CD4-positive, alpha-beta memory T cell (primary cell): ENCODE measurements at regions of chr1 and their contacts with region 1.

Region 1: DNA sequence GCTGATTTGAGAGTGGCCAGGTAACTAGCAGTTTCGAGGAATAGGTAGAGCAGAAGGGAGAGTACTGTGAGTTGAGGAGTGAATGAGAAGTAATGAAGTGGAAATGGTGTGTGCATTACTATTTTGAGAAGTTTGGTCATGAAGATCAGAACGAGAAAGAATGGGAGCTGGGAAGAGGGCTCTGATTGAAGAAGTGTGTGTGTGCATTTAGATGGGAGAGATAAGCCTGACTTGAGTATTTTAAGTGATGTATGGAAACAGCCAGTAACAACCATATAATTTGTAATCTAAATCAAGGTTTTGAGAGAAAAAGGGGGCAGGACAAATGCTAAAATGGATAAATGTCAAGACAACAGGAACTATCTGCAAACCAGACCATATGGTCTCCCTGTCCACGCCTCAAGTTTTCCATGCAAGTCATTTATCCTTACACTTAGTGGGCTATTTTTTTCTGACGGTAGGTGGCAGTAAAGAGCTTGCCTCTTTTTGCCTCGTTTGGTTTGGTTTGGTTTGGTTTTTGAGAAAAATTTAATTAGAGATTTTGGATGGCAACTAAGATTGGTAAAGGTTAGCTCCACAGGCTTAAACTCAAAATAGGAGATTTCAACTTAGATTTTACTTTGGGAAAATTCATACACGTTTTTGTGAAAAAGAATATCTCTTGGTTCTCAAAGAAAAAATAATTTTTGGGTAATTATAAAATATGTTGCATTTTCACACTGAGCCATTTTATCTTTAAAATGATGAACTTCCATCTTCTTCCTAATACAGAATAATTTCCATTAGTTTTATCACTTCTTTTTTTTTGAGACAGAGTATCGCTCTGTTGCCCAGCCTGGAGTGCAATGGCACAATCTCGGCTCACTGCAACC is 9.5 kb upstream of the B3GALNT2 start:
- DNase-seq: peak; percentile 47 to 68 (median 63)
- H3K4me3 ChIP-seq: no peak overlapping the region
- H3K4me3 Mint-ChIP-seq: no peak overlapping the region
- H3K27ac ChIP-seq: no peak overlapping the region
- H3K27ac Mint-ChIP-seq: peak overlapping the region in 1 of 7 donors; percentile 30
- H3K4me1 ChIP-seq: no peaks in the 10 kb centered on the region
- H3K4me1 Mint-ChIP-seq: peaks cover 0 to 1% (median 0%) of the 10 kb centered on the region in 4 donors
- H3K27me3 ChIP-seq: no peaks in the 10 kb centered on the region
- H3K27me3 Mint-ChIP-seq: peaks cover 4 to 6% of the 10 kb centered on the region in 2 donors

Region 2: GRCh38 chr1:234823191-234824176 is 690.2 kb before region 1 on chr1:
- CTCF ChIA-PET with region 1: no interaction called
- POLR2A ChIA-PET with region 1: no interaction called
- intact Hi-C with region 1: no loop called
- DNase-seq: no peak
- H3K4me3 ChIP-seq: no peak overlapping the region
- H3K4me3 Mint-ChIP-seq: no peak overlapping the region
- H3K27ac ChIP-seq: no peak overlapping the region
- H3K27ac Mint-ChIP-seq: peak overlapping the region in 2 of 7 donors; percentile 18 to 66
- H3K4me1 ChIP-seq: no peaks in the 10 kb centered on the region
- H3K4me1 Mint-ChIP-seq: peaks cover 0 to 2% (median 0%) of the 10 kb centered on the region in 4 donors
- H3K27me3 ChIP-seq: no peaks in the 10 kb centered on the region
- H3K27me3 Mint-ChIP-seq: no peaks in the 10 kb centered on the region

Region 3: GRCh38 chr1:235391874-235392273 is 121.9 kb before region 1 on chr1:
- CTCF ChIA-PET with region 1: no interaction called
- POLR2A ChIA-PET with region 1: no interaction called
- intact Hi-C with region 1: no loop called
- DNase-seq: no peak
- H3K4me3 ChIP-seq: no peak overlapping the region
- H3K4me3 Mint-ChIP-seq: no peak overlapping the region
- H3K27ac ChIP-seq: no peak overlapping the region
- H3K27ac Mint-ChIP-seq: no peak overlapping the region
- H3K4me1 ChIP-seq: no peaks in the 10 kb centered on the region
- H3K4me1 Mint-ChIP-seq: peaks cover 2 to 10% (median 5%) of the 10 kb centered on the region in 4 donors
- H3K27me3 ChIP-seq: no peaks in the 10 kb centered on the region
- H3K27me3 Mint-ChIP-seq: no peaks in the 10 kb centered on the region

Region 4: DNA sequence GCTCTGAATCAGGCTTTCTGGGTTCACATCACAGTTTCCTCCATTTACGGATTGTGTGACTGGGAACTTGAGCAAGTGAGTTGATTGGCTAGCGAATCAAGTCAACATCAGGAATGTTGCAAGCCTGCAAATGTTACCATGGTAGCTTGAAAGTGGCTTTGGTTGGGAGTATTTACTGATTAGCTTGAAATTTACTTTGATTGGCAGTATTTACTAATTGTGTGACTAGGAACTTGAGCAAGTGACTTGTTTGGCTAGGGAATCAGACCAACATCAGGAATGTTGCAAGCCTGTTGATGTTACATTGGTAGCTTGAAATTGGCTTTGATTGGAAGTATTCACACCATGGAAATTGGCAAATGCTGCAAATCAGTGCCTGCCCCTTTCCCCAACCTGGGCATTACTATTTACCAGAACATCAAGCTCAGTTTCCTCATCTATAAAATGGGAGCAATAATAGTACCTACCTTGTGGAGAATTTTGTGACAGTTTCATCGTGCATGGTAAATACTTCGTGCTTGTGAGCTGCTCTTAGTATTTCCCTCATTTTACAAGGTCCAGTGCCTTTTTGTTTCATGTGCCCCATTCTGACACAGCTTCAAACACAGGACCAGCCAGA is 13.6 kb after region 1 on chr1:
- CTCF ChIA-PET with region 1: interaction called, 12 read pairs
- POLR2A ChIA-PET with region 1: no interaction called
- intact Hi-C with region 1: no loop called
- DNase-seq: no peak
- H3K4me3 ChIP-seq: no peak overlapping the region
- H3K4me3 Mint-ChIP-seq: no peak overlapping the region
- H3K27ac ChIP-seq: no peak overlapping the region
- H3K27ac Mint-ChIP-seq: no peak overlapping the region
- H3K4me1 ChIP-seq: no peaks in the 10 kb centered on the region
- H3K4me1 Mint-ChIP-seq: no peaks in the 10 kb centered on the region
- H3K27me3 ChIP-seq: no peaks in the 10 kb centered on the region
- H3K27me3 Mint-ChIP-seq: peaks cover 0 to 2% of the 10 kb centered on the region in 2 donors

Region 5: DNA sequence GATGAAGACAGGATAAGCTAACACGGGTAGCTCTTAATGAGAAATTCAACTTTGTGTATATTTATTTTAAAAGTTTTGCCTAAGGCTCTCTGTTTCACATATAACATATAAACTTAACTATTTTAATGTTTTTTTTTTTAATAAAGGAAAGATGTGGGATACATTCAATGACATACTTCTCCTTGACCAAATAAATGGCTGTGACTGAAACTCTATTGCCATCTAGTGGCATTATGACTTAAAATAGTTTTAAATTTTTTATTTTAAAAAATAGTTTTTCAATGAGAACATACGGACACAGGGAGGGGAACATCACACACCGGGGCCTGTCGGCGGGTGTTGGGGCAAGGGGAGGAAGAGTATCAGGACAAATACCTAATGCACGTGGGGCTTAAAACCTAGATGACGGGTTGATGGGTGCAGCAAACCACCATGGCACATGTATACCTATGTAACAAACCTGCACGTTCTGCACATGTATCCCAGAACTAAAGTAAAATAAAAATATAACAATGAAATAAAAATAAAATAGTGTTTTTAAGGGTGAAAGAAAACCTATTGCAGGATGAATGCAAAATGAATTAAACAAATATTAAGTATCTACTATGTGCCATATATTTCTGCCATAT is 269.5 kb after region 1 on chr1:
- CTCF ChIA-PET with region 1: interaction called, 41 read pairs
- POLR2A ChIA-PET with region 1: interaction called, 5 read pairs
- intact Hi-C with region 1: loop called (anchors 1 kb)
- DNase-seq: peak in 4 of 5 donors; percentile 8 to 30 (median 9)
- H3K4me3 ChIP-seq: no peak overlapping the region
- H3K4me3 Mint-ChIP-seq: no peak overlapping the region
- H3K27ac ChIP-seq: no peak overlapping the region
- H3K27ac Mint-ChIP-seq: no peak overlapping the region
- H3K4me1 ChIP-seq: no peaks in the 10 kb centered on the region
- H3K4me1 Mint-ChIP-seq: no peaks in the 10 kb centered on the region
- H3K27me3 ChIP-seq: no peaks in the 10 kb centered on the region
- H3K27me3 Mint-ChIP-seq: no peaks in the 10 kb centered on the region